Activated CD4-positive, alpha-beta T cell treated with anti-CD3 and anti-CD28 coated beads, Interleukin-2, amount 10 ng/mL, durations not matched to agents 7 days and 5 days (primary cell): ENCODE measurements at regions of chr5 and their contacts with region 1.

Region 1: GRCh38 chr5:140351609-140352334 is 5.4 kb upstream of the HBEGF start:
- DNase-seq: peak; percentile 87
- H3K4me3 Mint-ChIP-seq: no peak overlapping the region
- H3K27ac Mint-ChIP-seq: peak overlapping the region; percentile 68
- H3K4me1 Mint-ChIP-seq: peaks cover 30% of the 10 kb centered on the region
- H3K27me3 Mint-ChIP-seq: peaks cover 4% of the 10 kb centered on the region

Region 2: GRCh38 chr5:140251527-140251973 is 100.2 kb before region 1 on chr5:
- CTCF ChIA-PET with region 1: interaction called, 88 read pairs
- POLR2A ChIA-PET with region 1: interaction called, 3 read pairs
- DNase-seq: peak; percentile 80
- H3K4me3 Mint-ChIP-seq: peak overlapping the region; percentile 53
- H3K27ac Mint-ChIP-seq: peak overlapping the region; percentile 85
- H3K4me1 Mint-ChIP-seq: peaks cover 36% of the 10 kb centered on the region
- H3K27me3 Mint-ChIP-seq: no peaks in the 10 kb centered on the region

Region 3: GRCh38 chr5:140362860-140363630 is 11.3 kb after region 1 on chr5:
- CTCF ChIA-PET with region 1: interaction called, 14 read pairs
- POLR2A ChIA-PET with region 1: no interaction called
- DNase-seq: peak; percentile 86
- H3K4me3 Mint-ChIP-seq: peak overlapping the region; percentile 61
- H3K27ac Mint-ChIP-seq: peak overlapping the region; percentile 60
- H3K4me1 Mint-ChIP-seq: peaks cover 5% of the 10 kb centered on the region
- H3K27me3 Mint-ChIP-seq: peaks cover 5% of the 10 kb centered on the region